Activated B cell treated with CpG ODN at 0.5 μM for 24 hours (primary cell): ENCODE measurements at regions of chr10 and their contacts with region 1.

Region 1: GRCh38 chr10:96287392-96288105 is 16.2 kb upstream of the BLNK start:
- DNase-seq: no peak
- ATAC-seq: peak; percentile 72
- H3K4me3 Mint-ChIP-seq: peak overlapping the region; percentile 75
- H3K27ac Mint-ChIP-seq: peak overlapping the region; percentile 96
- H3K4me1 Mint-ChIP-seq: peaks cover 75% of the 10 kb centered on the region
- H3K27me3 Mint-ChIP-seq: no peaks in the 10 kb centered on the region
- CTCF ChIP-seq: no peak

Region 2: DNA sequence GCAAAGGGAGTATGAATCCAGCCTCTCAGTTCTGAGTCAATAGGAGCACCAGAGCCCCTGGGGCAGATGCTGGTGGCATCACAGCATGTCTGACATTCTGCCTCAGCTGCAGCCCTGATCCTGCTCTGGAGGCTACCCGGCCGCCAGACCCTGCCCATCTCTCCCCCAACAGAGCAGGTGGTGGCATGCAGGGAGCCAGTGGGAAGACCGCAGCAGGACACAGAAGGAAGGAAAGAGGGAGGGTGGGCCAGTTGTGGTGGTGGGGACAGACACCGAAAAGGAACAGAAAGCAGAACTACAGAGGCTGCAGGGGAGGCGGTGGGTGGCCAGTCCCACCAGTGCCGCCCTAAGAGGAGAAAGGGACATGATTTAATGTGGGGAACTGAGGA is 51.5 kb before region 1 on chr10:
- CTCF ChIA-PET with region 1: interaction called, 612 read pairs
- POLR2A ChIA-PET with region 1: interaction called, 169 read pairs
- intact Hi-C with region 1: no loop called
- DNase-seq: no peak
- ATAC-seq: peak; percentile 67
- H3K4me3 Mint-ChIP-seq: peak overlapping the region; percentile 57
- H3K27ac Mint-ChIP-seq: peak overlapping the region; percentile 85
- H3K4me1 Mint-ChIP-seq: peaks cover 93% of the 10 kb centered on the region
- H3K27me3 Mint-ChIP-seq: no peaks in the 10 kb centered on the region
- CTCF ChIP-seq: no peak

Region 3: DNA sequence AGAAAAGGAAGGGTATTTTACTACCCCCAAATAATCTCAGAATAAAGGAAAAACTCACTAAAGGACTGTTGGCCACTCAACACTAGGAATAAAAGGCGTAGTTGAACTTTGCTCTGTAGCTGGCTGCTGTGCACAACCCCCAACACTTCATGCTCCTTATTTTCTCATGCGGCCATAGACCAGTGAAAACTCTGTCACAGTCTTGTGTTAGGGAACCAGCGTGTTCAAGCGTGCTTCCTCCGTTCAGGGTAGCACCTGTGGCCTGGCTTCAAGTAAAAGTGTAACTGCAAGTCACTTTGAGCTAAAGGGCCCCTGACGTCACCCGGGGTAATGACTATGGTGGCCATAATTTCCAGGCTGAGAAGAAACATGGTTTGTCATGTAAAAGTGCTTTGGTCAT is 43.2 kb before region 1 on chr10:
- CTCF ChIA-PET with region 1: interaction called, 15 read pairs
- POLR2A ChIA-PET with region 1: interaction called, 20 read pairs
- intact Hi-C with region 1: loop called (anchors 1 kb)
- DNase-seq: peak; percentile 61
- ATAC-seq: peak; percentile 96
- H3K4me3 Mint-ChIP-seq: peak overlapping the region; percentile 67
- H3K27ac Mint-ChIP-seq: peak overlapping the region; percentile 91
- H3K4me1 Mint-ChIP-seq: peaks cover 80% of the 10 kb centered on the region
- H3K27me3 Mint-ChIP-seq: no peaks in the 10 kb centered on the region
- CTCF ChIP-seq: no peak

Region 4: GRCh38 chr10:96257944-96258343 is 29.6 kb before region 1 on chr10:
- CTCF ChIA-PET with region 1: interaction called, 4 read pairs
- POLR2A ChIA-PET with region 1: interaction called, 72 read pairs
- intact Hi-C with region 1: loop called (anchors 5 kb)
- DNase-seq: no peak
- ATAC-seq: peak; percentile 16
- H3K4me3 Mint-ChIP-seq: peak overlapping the region; percentile 48
- H3K27ac Mint-ChIP-seq: peak overlapping the region; percentile 83
- H3K4me1 Mint-ChIP-seq: peaks cover 90% of the 10 kb centered on the region
- H3K27me3 Mint-ChIP-seq: no peaks in the 10 kb centered on the region
- CTCF ChIP-seq: no peak

Region 5: DNA sequence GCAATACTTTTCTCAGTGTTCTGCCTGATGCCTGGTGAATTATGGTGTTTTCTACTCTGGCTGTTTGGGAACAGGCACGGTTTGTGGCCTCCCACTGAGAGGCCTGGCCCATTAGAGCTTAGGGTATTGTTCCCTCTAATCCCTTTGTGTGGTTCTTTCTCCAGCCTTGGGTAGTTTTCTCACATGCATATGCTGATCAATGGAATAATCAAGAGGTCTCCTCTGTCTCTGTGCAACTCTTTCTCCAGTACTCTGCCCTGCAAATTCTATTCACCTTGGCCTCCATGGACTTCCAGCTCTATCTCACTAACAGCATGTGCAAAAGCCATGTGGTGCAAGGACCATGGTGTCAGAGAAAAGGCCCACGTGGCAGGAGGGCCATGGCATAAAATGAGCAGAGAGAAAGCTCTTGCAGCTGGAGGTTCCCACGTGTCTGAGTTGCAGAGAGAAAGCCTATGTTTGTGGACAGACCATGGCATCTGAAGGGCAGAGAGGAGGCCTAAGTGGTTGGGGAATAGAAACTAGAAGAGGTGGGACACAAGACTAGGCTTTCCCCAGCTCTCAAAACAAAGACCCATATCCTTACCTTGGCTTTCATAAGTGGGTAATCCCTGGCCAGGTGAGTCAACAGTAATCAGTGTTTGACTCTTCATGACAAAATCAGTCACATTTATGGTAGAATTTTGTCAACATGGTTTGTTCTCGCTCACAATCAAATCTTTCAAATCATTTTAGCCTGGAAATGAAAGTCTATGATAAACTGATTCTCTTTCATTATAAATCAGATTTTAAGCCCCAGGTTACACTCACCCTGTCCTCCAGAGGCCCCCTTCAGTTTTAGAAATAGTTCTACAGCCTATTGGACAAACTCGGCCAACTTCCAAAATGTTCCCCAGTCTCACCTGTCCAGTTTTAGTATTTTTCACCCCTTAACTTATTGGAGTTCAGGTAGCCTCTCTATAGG is 54.0 kb after region 1 on chr10:
- CTCF ChIA-PET with region 1: no interaction called
- POLR2A ChIA-PET with region 1: no interaction called
- intact Hi-C with region 1: no loop called
- DNase-seq: no peak
- ATAC-seq: no peak
- H3K4me3 Mint-ChIP-seq: no peak overlapping the region
- H3K27ac Mint-ChIP-seq: no peak overlapping the region
- H3K4me1 Mint-ChIP-seq: peaks cover 6% of the 10 kb centered on the region
- H3K27me3 Mint-ChIP-seq: no peaks in the 10 kb centered on the region
- CTCF ChIP-seq: no peak

Region 6: DNA sequence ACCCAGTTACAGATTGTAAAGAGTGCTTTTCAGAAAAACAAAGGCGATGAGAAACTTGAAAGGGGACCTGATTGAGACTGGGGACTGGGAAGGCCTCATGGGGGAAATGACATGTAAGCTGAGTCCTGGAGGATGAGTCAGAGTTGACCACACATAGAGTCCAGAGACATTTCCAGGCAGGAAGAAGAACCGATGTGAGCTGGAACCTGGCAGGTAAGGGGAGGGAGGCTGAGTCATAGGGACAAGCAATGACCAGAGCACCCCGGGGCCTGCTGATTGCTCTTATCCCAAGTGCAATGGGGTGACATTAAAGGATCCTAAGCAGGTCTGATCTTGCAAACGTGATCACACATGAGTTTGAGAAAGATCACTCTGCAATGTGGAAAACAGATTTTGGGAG is 214.4 kb after region 1 on chr10:
- CTCF ChIA-PET with region 1: no interaction called
- POLR2A ChIA-PET with region 1: no interaction called
- intact Hi-C with region 1: no loop called
- DNase-seq: no peak
- ATAC-seq: no peak
- H3K4me3 Mint-ChIP-seq: no peak overlapping the region
- H3K27ac Mint-ChIP-seq: no peak overlapping the region
- H3K4me1 Mint-ChIP-seq: no peaks in the 10 kb centered on the region
- H3K27me3 Mint-ChIP-seq: peaks cover 3% of the 10 kb centered on the region
- CTCF ChIP-seq: no peak

Region 7: GRCh38 chr10:97101166-97101940 is 813.8 kb after region 1 on chr10:
- CTCF ChIA-PET with region 1: no interaction called
- POLR2A ChIA-PET with region 1: no interaction called
- intact Hi-C with region 1: no loop called
- DNase-seq: no peak
- ATAC-seq: no peak
- H3K4me3 Mint-ChIP-seq: no peak overlapping the region
- H3K27ac Mint-ChIP-seq: no peak overlapping the region
- H3K4me1 Mint-ChIP-seq: no peaks in the 10 kb centered on the region
- H3K27me3 Mint-ChIP-seq: peaks cover 40% of the 10 kb centered on the region
- CTCF ChIP-seq: no peak